B cell (primary cell): ENCODE measurements at regions of chr5 and their contacts with region 1.

Region 1: DNA sequence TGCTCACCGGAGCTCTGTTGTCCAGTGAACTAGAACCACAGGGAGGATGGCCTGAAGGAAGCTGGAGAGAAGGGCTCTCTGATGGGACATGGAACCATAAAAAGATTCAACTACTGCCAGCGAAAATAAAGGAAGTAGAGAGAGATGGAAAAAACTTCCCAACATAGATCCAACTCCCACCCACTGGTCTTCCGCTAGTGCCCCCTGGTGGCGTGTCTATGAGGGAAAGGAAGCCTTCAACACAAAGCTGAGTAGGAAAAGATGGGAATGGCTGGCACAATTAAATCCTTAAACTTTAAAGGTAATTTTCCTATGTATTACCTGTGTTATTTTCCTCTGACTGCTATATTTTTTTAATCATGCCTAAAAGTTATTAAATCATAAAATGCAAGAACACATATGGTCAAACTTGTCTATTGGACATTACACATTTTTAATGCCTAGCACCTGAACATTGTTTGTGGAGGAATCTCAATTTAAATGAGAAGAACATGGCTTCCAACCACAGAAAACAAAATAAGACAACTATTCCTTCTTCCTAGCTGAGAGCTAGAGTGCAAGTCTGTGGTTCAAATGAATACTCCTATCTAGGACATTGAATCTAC is 51.5 kb downstream of the CEP120 start:
- DNase-seq: peak; percentile 40
- ATAC-seq: no peak
- H3K4me3 ChIP-seq: no peak overlapping the region
- H3K4me3 Mint-ChIP-seq: no peak overlapping the region
- H3K27ac ChIP-seq: no peak overlapping the region
- H3K27ac Mint-ChIP-seq: no peak overlapping the region
- H3K4me1 ChIP-seq: no peaks in the 10 kb centered on the region
- H3K4me1 Mint-ChIP-seq: no peaks in the 10 kb centered on the region
- H3K27me3 ChIP-seq: no peaks in the 10 kb centered on the region
- H3K27me3 Mint-ChIP-seq: no peaks in the 10 kb centered on the region
- CTCF ChIP-seq: peak; percentile 56

Region 2: GRCh38 chr5:122500245-122501075 is 871.2 kb before region 1 on chr5:
- CTCF ChIA-PET with region 1: interaction called, 6 read pairs
- POLR2A ChIA-PET with region 1: no interaction called
- intact Hi-C with region 1: loop called (anchors 5 kb)
- DNase-seq: peak; percentile 25
- ATAC-seq: no peak
- H3K4me3 ChIP-seq: no peak overlapping the region
- H3K4me3 Mint-ChIP-seq: no peak overlapping the region
- H3K27ac ChIP-seq: no peak overlapping the region
- H3K27ac Mint-ChIP-seq: no peak overlapping the region
- H3K4me1 ChIP-seq: no peaks in the 10 kb centered on the region
- H3K4me1 Mint-ChIP-seq: peaks cover 4% of the 10 kb centered on the region
- H3K27me3 ChIP-seq: peaks cover 0 to 2% (median 0%) of the 10 kb centered on the region in 4 experiments
- H3K27me3 Mint-ChIP-seq: peaks cover 9% of the 10 kb centered on the region
- CTCF ChIP-seq: peak; percentile 34

Region 3: DNA sequence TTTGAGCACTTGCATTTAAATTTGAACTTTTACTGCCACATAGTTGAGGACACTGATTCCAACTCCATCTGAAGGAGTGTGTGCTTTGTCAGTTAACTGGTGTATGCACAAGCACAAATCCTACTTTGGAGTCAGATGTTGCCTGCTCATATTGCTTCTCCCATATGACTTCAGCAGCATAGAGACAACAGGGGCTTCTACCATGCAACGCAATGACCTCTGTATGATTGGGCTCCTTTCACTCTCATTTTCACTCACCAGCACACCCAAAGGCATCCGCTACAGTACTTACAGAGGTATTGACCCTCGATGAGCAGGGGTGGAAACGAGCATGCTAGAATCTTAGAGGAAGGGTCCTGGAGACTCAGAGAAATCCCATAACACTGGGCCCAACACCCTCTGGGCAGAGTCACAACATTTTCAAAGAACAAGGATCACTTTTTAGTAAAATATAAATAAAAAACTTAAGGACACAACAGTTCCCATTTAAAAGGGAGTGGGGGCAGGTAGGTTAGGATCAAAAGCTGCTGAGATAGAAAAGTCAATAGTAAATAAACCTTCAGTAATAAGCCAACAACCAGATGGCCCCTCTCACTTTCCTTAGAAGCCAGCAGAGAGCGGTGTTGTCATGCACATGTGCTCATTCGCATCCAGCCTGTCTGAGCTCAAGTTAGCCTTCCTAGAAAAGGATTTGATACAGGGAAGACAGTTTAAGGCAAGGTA is 855.8 kb before region 1 on chr5:
- CTCF ChIA-PET with region 1: interaction called, 25 read pairs
- POLR2A ChIA-PET with region 1: no interaction called
- intact Hi-C with region 1: loop called (anchors 2 kb)
- DNase-seq: peak; percentile 77
- ATAC-seq: peak; percentile 73
- H3K4me3 ChIP-seq: no peak overlapping the region
- H3K4me3 Mint-ChIP-seq: no peak overlapping the region
- H3K27ac ChIP-seq: no peak overlapping the region
- H3K27ac Mint-ChIP-seq: no peak overlapping the region
- H3K4me1 ChIP-seq: peaks cover 0 to 3% of the 10 kb centered on the region in 2 donors
- H3K4me1 Mint-ChIP-seq: peaks cover 4% of the 10 kb centered on the region
- H3K27me3 ChIP-seq: peaks cover 0 to 4% (median 0%) of the 10 kb centered on the region in 4 experiments
- H3K27me3 Mint-ChIP-seq: peaks cover 4% of the 10 kb centered on the region
- CTCF ChIP-seq: peak; percentile 89

Region 4: DNA sequence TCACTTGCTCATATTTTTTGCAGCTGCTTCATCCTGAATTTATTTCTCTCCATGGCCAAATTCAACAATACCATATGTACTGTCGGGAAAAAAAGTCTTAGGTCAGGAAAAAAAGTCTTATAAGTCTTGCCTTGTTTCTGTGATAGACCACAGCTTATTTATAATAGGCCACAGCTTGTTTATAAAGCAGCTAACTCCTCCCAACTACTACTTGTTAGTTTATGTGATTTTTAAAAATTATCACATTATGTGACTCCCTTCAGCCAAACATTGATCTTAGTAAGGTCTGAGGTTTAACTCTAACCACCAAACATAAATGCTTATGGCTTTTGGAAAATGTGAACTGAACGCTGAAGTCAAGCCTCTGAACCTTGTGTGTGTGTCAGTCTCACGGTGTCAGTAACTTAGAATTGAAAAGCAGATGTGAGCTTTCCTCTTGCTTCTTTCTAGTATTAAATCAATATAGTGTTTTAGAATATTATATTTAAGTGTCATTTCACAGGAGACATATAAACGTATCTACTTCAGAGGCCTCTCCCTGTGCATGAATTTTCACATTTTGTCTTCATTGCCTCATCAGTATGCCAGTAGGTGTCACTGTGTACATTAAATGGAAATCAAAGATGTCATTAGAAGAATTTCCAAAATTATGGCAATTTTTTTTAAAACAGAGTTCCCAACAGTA is 474.9 kb before region 1 on chr5:
- CTCF ChIA-PET with region 1: interaction called, 3 read pairs
- POLR2A ChIA-PET with region 1: no interaction called
- intact Hi-C with region 1: loop called (anchors 5 kb)
- DNase-seq: no peak
- ATAC-seq: no peak
- H3K4me3 ChIP-seq: no peak overlapping the region
- H3K4me3 Mint-ChIP-seq: no peak overlapping the region
- H3K27ac ChIP-seq: no peak overlapping the region
- H3K27ac Mint-ChIP-seq: no peak overlapping the region
- H3K4me1 ChIP-seq: no peaks in the 10 kb centered on the region
- H3K4me1 Mint-ChIP-seq: no peaks in the 10 kb centered on the region
- H3K27me3 ChIP-seq: no peaks in the 10 kb centered on the region
- H3K27me3 Mint-ChIP-seq: no peaks in the 10 kb centered on the region
- CTCF ChIP-seq: peak; percentile 45

Region 5: DNA sequence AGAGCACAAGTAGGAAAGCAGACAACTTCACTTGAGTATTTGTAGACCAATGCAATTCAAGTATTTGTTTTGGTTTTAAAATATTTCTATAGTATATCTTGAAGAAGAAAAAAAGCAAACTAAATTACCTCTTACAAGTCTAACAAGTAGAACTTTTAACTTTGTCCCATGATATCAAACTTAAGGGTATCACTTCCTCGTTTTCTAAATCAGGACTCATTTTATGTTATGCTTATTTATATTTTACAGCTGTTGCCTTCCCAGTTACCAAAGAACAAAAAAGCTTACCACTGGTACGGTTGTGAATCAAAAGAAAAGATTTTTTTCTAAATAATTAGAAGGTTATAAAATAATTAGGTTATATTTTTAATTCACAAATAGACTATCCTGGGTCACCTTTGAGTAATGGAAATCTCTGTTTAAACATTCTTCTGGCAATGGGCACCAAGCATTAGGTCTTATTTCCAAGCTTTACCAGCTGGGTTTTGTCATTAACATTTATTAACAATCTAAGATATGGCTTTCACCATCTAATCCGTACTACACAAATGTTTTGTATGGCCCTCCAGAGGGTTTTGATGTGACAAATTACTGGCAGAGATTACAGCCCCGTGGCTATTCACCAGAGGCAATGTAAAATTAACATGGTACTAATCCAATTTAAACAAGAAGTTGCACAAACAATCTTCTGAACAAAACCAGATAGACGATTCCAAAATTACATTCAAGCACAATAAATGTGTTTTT is 12.1 kb before region 1 on chr5:
- CTCF ChIA-PET with region 1: interaction called, 31 read pairs
- POLR2A ChIA-PET with region 1: no interaction called
- intact Hi-C with region 1: no loop called
- DNase-seq: peak; percentile 19
- ATAC-seq: no peak
- H3K4me3 ChIP-seq: no peak overlapping the region
- H3K4me3 Mint-ChIP-seq: no peak overlapping the region
- H3K27ac ChIP-seq: no peak overlapping the region
- H3K27ac Mint-ChIP-seq: peak overlapping the region; percentile 68
- H3K4me1 ChIP-seq: peaks cover 11 to 13% of the 10 kb centered on the region in 2 donors
- H3K4me1 Mint-ChIP-seq: peaks cover 25% of the 10 kb centered on the region
- H3K27me3 ChIP-seq: no peaks in the 10 kb centered on the region
- H3K27me3 Mint-ChIP-seq: no peaks in the 10 kb centered on the region
- CTCF ChIP-seq: no peak